ENCODE measurements at regions of chr2 and their contacts with region 1.

Region 1: GRCh38 chr2:195559431-195559914 is 97.6 kb upstream of the SLC39A10 start:
- DNase-seq: peak; percentile 81
- H3K4me3 Mint-ChIP-seq: peak overlapping the region; percentile 77
- H3K27ac Mint-ChIP-seq: peak overlapping the region; percentile 96
- H3K4me1 Mint-ChIP-seq: peaks cover 62% of the 10 kb centered on the region
- H3K27me3 Mint-ChIP-seq: no peaks in the 10 kb centered on the region

Region 2: DNA sequence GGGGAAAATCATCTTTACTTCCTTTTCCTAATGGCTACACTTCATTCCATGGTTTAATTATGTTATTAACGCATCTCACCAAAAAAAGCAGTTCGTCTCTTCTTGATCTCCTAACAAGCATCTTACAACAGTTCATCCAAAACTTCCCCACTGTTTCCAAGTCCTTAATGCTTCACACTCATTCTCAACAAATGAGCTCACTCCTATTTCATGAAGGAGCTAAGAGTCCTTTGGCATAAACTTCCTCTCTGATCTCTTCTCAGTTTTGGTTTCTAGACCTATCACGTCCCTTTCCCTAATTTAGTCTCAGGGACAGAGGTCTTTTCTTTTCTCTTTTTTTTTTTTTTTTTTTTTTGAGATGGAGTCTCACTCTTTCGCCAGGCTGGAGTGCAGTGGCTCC is 108.3 kb before region 1 on chr2:
- intact Hi-C with region 1: loop called (anchors 1 kb)
- DNase-seq: no peak
- H3K4me3 Mint-ChIP-seq: no peak overlapping the region
- H3K27ac Mint-ChIP-seq: no peak overlapping the region
- H3K4me1 Mint-ChIP-seq: peaks cover 26% of the 10 kb centered on the region
- H3K27me3 Mint-ChIP-seq: no peaks in the 10 kb centered on the region

Region 3: GRCh38 chr2:195477248-195477995 is 82.1 kb before region 1 on chr2:
- intact Hi-C with region 1: loop called (anchors 2 kb)
- DNase-seq: no peak
- H3K4me3 Mint-ChIP-seq: peak overlapping the region; percentile 0
- H3K27ac Mint-ChIP-seq: peak overlapping the region; percentile 59
- H3K4me1 Mint-ChIP-seq: peaks cover 53% of the 10 kb centered on the region
- H3K27me3 Mint-ChIP-seq: no peaks in the 10 kb centered on the region

Region 4: DNA sequence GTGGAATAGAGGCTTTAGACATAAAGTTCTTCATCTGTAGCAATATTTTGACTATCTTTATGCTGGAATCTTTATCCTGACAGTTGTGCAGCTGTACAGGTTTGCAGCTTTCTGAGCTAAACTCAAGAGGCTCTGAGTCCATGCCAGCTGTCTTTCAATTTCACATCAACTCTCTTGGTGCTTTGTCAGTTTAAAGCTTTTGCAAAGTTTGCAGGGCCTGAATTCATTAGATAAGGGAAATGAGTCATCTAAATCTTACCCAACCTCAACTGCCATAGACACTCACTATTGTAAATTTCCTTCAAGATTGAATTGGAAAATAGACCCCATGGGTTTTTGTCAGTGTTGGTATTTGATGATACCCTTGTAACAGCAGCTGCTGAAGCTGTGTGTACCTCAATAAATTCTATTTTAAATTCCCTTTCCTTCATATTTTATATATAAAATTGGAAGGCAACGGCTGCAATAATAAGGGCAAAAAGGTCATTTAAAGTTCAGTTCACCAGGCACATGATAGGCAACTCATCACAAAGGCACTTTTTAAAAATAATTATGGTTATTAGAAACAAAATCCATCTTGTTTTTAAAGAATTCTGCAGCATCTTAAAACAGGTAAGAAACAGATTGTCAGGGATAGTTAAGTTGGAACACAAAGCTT is 72.4 kb before region 1 on chr2:
- intact Hi-C with region 1: loop called (anchors 1 kb)
- DNase-seq: peak; percentile 26
- H3K4me3 Mint-ChIP-seq: peak overlapping the region; percentile 32
- H3K27ac Mint-ChIP-seq: peak overlapping the region; percentile 61
- H3K4me1 Mint-ChIP-seq: peaks cover 56% of the 10 kb centered on the region
- H3K27me3 Mint-ChIP-seq: no peaks in the 10 kb centered on the region

Region 5: DNA sequence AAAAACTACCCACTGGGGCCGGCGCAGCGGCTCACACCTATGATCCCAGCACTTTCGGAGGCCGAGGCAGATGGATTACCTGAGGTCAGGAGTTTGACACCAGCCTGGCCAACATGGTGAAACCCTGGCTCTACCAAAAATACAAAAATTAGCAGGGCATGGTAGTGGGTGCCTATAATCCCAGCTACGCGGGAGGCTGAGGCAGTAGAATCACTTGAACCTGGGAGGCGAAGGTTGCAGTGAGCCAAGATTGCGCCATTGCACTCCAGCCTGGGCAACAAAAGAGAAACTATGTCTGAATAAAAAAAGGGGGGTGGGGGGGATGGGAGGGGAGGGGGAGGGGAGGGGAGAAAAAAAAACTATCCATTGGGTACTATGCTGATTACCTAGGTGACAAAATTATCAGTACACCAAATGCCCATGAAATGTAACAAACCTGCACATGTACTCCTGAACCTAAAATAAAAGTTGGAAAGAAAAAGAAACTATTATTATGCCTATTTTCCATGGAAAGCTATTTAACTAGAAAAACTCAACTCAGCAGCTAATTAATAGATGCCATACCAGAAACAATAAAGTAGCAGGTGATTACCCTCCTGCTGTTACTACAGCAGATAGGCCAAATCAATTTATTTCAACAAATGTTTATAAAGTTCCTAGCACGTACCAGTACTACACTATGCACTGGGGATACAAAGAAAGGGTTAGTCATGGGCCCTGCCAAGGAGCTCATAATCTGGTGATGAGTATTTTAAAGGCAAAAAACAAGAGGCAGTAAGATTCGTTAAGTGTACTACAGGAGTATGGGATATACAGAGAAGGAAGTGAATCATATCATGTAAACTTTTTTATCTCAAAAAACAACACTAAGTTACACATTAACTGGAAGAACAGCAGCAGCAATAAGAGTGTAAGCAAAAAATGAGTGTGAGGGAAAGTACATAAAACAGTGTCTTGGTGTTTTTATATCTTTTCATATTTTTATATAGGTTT is 15.3 kb before region 1 on chr2:
- intact Hi-C with region 1: loop called (anchors 1 kb)
- DNase-seq: no peak
- H3K4me3 Mint-ChIP-seq: peak overlapping the region; percentile 32
- H3K27ac Mint-ChIP-seq: peak overlapping the region; percentile 88
- H3K4me1 Mint-ChIP-seq: peaks cover 83% of the 10 kb centered on the region
- H3K27me3 Mint-ChIP-seq: no peaks in the 10 kb centered on the region

Region 6: DNA sequence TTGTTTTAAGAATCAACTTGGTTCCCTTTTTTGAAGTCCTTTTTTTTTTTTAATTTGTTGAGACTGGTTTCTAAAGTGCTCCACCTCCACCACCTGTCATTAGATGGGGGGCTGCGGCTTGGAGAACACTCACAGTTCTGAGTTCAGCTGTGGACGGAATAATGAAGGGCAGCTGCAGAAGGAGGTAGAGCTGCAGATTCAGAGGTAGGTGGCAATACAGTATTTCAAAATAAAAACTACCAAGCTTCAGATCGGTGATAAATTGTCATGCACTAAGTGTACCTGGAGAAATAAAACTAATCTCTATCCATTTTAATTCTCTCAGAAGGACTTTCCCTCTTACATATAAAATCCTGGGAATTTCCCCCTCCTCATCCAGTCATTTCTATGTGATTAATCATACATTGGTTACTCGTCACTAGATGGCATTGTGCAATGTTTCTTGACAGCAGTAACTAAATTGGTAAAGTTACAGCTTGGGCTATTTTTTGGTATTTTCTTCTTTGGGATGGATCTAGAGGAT is 16.5 kb after region 1 on chr2:
- intact Hi-C with region 1: loop called (anchors 1 kb)
- DNase-seq: no peak
- H3K4me3 Mint-ChIP-seq: no peak overlapping the region
- H3K27ac Mint-ChIP-seq: peak overlapping the region; percentile 13
- H3K4me1 Mint-ChIP-seq: peaks cover 58% of the 10 kb centered on the region
- H3K27me3 Mint-ChIP-seq: no peaks in the 10 kb centered on the region

Region 7: DNA sequence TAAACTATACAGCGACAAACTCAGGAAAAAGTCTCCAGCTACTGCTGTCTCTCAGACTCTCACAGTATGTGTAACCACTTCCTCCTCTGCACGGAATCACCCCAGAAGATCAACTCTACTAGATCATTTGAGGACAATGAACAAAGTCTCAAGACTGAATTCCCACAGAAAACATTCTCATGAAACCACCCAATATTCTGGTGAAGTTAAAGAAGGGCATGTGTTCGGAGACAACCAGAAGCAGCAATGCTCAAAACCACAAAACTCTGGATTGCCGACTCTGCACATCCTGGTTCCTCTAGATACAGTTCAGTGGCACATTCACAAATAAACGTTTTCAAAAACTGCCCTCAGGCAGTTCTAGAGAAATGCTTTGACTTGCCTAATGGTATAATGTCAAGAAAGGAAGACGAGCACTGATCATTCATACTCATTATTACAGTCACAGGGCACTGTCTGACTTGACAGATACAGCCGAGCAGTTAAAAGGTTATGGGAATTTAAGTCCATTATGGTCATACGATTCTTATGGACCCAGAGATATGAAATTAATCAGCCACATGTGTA is 703.8 kb after region 1 on chr2:
- intact Hi-C with region 1: loop called (anchors 5 kb)
- DNase-seq: peak; percentile 57
- H3K4me3 Mint-ChIP-seq: peak overlapping the region; percentile 65
- H3K27ac Mint-ChIP-seq: peak overlapping the region; percentile 88
- H3K4me1 Mint-ChIP-seq: peaks cover 79% of the 10 kb centered on the region
- H3K27me3 Mint-ChIP-seq: no peaks in the 10 kb centered on the region

Measured in activated T-helper 1 cell treated with anti-CD3 and anti-CD28 coated beads, Interleukin-12 subunit alpha, Interleukin-12 subunit beta, Interleukin-2, Interleukin-4 antibody, amounts not matched to agents 30 ng/mL and 10 ng/mL and 1 ng/mL, durations not matched to agents 14 hours and 24 hours and 36 hours (primary cell).